Activated CD8-positive, alpha-beta memory T cell treated with anti-CD3 and anti-CD28 coated beads, Interleukin-2, amount 10 ng/mL, durations not matched to agents 7 days and 5 days (primary cell): ENCODE measurements at regions of chr1 and their contacts with region 1.

Region 1: DNA sequence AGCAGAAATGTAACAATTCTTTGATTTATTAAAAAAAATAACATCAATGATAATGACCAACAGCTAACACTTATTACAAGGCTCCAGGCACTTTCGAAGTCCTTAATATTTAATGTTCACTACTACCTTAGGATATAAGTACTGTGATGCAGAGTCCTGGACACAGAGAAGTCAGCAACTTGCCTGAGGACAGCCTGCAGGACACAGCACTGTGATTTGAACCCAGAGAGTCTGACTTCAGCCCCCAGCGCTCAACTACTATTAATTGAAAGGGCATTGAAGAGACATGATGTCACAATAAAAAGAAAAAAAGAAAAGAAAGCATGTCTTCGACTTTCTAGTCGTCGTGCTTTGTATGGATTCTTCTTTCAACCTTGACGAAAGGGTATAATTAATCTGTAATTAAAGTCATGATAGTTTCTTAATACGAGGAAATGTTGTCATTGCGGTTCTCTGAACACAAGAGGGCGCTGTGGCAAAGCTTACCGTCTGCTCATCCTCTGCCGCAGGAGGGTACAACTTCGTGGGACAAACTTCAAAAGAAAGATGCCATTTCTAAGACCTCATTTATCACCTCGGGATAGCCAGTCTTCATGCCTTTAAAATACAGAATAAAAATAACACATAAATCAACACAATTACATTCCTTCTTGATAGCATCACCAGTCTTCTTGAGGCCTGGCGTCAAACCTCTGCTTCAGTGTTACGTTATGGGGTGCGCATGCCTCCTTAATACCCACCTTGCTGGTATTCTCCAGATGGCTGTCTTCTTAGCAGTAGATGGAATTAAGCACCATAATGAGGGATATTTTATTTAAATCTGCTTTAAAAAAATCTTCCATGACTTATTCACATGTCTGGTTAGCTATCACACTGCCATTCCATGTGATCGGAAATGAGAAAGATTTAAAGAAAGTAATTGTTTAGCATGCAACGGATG is 240.1 kb downstream of the DISC1 start:
- DNase-seq: peak; percentile 61
- ATAC-seq: no peak
- H3K4me3 Mint-ChIP-seq: no peak overlapping the region
- H3K27ac Mint-ChIP-seq: no peak overlapping the region
- H3K4me1 Mint-ChIP-seq: peaks cover 10% of the 10 kb centered on the region
- H3K27me3 Mint-ChIP-seq: no peaks in the 10 kb centered on the region

Region 2: GRCh38 chr1:231828182-231828920 is 38.3 kb before region 1 on chr1:
- CTCF ChIA-PET with region 1: no interaction called
- DNase-seq: no peak
- ATAC-seq: no peak
- H3K4me3 Mint-ChIP-seq: no peak overlapping the region
- H3K27ac Mint-ChIP-seq: no peak overlapping the region
- H3K4me1 Mint-ChIP-seq: no peaks in the 10 kb centered on the region
- H3K27me3 Mint-ChIP-seq: no peaks in the 10 kb centered on the region

Region 3: GRCh38 chr1:231971397-231972104 is 104.9 kb after region 1 on chr1:
- CTCF ChIA-PET with region 1: no interaction called
- DNase-seq: no peak
- ATAC-seq: no peak
- H3K4me3 Mint-ChIP-seq: no peak overlapping the region
- H3K27ac Mint-ChIP-seq: no peak overlapping the region
- H3K4me1 Mint-ChIP-seq: peaks cover 34% of the 10 kb centered on the region
- H3K27me3 Mint-ChIP-seq: no peaks in the 10 kb centered on the region

Region 4: DNA sequence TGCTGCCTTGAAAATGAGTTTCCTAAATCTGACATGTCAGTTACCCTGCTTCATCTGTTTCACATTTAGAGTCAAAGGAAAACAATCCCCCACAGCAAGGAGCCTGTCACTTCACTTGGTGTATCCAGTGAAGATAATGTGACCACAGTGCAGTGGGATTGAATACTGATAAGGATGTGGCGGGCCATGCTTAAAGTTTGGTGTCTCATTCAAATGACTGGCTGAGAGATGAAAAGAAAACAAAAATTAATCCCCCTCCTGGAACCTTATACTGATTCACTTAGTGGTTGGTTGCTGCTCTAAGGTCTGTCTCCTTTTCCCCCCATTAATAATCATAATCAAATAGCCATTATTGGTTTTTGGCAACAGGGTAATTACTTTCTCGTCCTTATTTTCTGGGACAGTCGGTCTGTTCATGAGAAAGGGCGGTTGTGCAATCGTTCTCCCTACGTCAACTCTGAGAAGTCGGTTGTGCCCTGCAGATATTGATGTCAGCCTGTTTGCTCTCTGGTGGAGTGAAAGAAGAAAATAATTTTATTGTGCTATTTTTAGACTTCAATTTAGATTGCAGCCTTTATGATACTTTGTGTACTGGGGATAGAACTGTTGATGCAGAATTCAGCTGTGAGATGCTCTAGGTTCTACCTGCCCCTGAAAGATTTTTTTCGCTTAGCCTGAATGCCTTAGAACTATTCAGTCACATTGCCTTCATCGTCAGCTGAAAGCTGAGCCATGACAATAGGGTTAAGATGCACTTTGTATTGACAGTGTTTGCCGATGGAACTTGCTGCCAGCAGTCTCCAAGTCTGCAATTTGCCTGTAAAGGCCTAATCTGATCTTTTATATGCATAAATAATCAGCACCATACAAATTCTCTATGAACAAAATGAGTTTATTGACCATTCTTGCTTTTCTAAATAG is 120.2 kb after region 1 on chr1:
- CTCF ChIA-PET with region 1: no interaction called
- DNase-seq: no peak
- ATAC-seq: no peak
- H3K4me3 Mint-ChIP-seq: no peak overlapping the region
- H3K27ac Mint-ChIP-seq: no peak overlapping the region
- H3K4me1 Mint-ChIP-seq: peaks cover 7% of the 10 kb centered on the region
- H3K27me3 Mint-ChIP-seq: no peaks in the 10 kb centered on the region

Region 5: DNA sequence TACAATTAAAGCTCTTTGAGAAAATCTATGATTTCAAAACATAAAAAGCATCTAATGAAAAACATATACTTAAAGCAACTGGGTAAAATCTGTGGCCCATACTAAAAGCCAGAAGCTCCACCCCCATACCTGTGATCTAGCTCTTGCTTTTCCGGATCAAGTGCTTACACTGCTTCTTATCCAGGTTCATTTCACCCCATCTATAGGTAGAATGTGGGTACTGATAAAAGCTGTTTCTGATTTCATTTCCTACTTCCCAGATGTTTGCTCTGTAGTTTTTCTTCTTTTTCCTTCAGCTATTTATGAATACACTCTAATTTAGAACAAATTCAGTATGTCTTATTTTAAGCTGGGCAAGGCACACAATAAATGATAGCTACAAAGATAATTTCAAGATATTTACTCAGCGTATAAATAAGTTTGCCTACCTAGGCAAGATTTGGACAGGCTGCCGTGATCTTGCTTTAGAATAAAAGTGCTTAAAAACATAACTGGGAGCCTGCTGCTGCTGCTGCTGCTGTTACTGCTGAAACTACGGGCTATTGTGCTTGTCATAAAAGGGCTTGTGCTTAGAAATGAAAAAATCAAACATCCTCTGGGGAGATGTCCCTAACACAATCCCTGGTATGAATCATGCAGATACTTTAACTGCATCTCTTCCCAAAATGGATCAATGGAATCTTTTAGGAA is 761.1 kb after region 1 on chr1:
- CTCF ChIA-PET with region 1: interaction called, 10 read pairs
- DNase-seq: no peak
- ATAC-seq: no peak
- H3K4me3 Mint-ChIP-seq: no peak overlapping the region
- H3K27ac Mint-ChIP-seq: no peak overlapping the region
- H3K4me1 Mint-ChIP-seq: peaks cover 14% of the 10 kb centered on the region
- H3K27me3 Mint-ChIP-seq: peaks cover 42% of the 10 kb centered on the region